Activated CD4-positive, alpha-beta T cell treated with anti-CD3 and anti-CD28 coated beads, Interleukin-2, amount 10 ng/mL, durations not matched to agents 24 days and 14 days (primary cell): ENCODE measurements at regions of chr2 and their contacts with region 1.

Region 1: DNA sequence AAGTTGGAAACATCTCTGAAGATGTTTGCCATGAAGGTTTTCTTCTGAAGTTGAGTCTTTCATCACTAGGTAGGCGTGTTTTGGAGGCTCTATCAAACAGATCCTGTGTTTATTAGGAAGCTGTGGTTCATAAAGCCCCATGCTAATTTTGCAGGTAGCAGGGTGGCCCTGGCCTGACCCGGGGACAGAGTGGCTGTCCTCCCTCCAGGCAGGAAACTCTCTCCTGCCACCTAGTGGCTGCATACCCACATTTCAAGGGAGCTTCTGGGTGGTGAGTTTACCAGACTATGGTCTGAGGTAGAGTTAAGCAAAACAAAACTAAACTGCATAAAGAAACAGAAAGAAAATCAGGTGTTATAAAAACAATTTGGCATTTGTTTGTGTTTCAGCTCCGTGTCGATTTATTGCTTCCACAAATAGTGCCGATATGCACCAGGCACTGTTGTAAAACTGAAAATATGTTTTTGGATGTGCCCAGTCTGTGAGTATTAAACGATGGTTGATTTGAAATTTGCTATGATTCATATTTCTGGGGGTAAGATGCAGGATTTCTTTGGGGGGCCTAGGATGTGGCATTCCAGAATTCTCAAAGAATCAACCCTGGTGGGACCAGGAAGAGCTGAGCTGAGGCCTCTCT is 26.0 kb upstream of the IL37 start:
- DNase-seq: peak; percentile 94
- H3K4me3 Mint-ChIP-seq: peak overlapping the region; percentile 22
- H3K27ac Mint-ChIP-seq: peak overlapping the region; percentile 21
- H3K4me1 Mint-ChIP-seq: peaks cover 26% of the 10 kb centered on the region
- H3K27me3 Mint-ChIP-seq: no peaks in the 10 kb centered on the region

Region 2: GRCh38 chr2:112794131-112794733 is 90.8 kb before region 1 on chr2:
- intact Hi-C with region 1: loop called (anchors 1 kb)
- DNase-seq: peak; percentile 72
- H3K4me3 Mint-ChIP-seq: no peak overlapping the region
- H3K27ac Mint-ChIP-seq: peak overlapping the region; percentile 17
- H3K4me1 Mint-ChIP-seq: peaks cover 21% of the 10 kb centered on the region
- H3K27me3 Mint-ChIP-seq: no peaks in the 10 kb centered on the region

Region 3: DNA sequence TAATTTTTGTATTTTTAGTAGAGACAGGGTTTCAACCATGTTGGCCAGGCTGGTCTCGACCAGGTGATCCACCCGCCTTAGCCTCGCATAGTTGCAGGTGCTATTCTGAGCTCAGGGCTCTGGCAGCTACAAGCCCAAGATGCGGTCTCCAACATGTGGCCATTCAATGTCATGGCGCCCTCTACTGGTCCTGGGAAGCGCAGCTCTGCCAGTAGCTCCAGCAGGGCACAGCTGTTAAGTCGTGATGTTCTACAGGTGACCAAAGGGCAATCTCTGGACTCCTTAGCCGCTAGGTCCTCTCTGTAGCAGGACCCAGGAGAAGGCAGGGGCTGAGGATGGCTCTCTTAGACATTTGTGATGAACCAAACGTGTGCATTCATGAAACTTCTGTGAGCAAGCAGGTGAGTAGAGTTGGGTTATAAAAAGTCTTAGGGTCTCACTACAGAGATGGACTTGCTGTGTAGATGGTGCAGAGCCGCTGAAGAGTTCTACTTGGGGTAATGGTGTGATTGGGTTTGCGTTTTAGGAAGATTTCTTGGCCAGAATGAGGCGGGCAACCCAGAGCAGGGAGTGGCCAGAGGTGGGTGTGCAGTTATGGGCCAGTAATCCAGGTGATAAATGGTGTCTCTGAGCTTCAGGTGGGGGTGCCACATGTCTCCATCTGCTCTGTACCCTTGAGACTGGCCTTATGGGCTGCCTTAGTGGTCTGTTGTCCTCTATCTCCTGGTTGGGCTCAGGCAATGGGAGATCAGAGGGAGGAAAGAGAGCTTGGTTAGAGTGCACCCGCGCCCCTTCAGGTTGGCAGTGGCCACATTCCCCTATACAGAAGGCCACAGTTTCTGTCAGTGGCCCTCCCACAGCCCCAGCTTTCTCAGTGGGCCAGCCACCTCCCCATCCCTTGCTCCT is 57.0 kb after region 1 on chr2:
- intact Hi-C with region 1: loop called (anchors 5 kb)
- DNase-seq: peak; percentile 93
- H3K4me3 Mint-ChIP-seq: no peak overlapping the region
- H3K27ac Mint-ChIP-seq: peak overlapping the region; percentile 25
- H3K4me1 Mint-ChIP-seq: peaks cover 6% of the 10 kb centered on the region
- H3K27me3 Mint-ChIP-seq: peaks cover 17% of the 10 kb centered on the region